B cell (primary cell): ENCODE measurements at regions of chr12 and their contacts with region 1.

Region 1: GRCh38 chr12:751192-751998 is 984 bp upstream of the WNK1 start:
- DNase-seq: peak; percentile 94
- ATAC-seq: peak; percentile 47
- H3K4me3 ChIP-seq: peak overlapping the region; percentile 54 to 92 (median 87)
- H3K4me3 Mint-ChIP-seq: no peak overlapping the region
- H3K27ac ChIP-seq: peak overlapping the region; percentile 86 to 90
- H3K27ac Mint-ChIP-seq: no peak overlapping the region
- H3K4me1 ChIP-seq: peaks cover 23 to 25% of the 10 kb centered on the region in 2 donors
- H3K4me1 Mint-ChIP-seq: peaks cover 27% of the 10 kb centered on the region
- H3K27me3 ChIP-seq: no peaks in the 10 kb centered on the region
- H3K27me3 Mint-ChIP-seq: no peaks in the 10 kb centered on the region
- CTCF ChIP-seq: peak; percentile 60

Region 2: GRCh38 chr12:401235-402028 is 350.0 kb before region 1 on chr12 and contains the start of gene CCDC77:
- CTCF ChIA-PET with region 1: no interaction called
- POLR2A ChIA-PET with region 1: no interaction called
- intact Hi-C with region 1: loop called (anchors 5 kb)
- DNase-seq: peak; percentile 97
- ATAC-seq: peak; percentile 100
- H3K4me3 ChIP-seq: peak within 1 kb of the TSS; percentile 76 to 89 (median 82)
- H3K4me3 Mint-ChIP-seq: no peak within 1 kb of the TSS
- H3K27ac ChIP-seq: peak within 1 kb of the TSS; percentile 53 to 76
- H3K27ac Mint-ChIP-seq: no peak within 1 kb of the TSS
- H3K4me1 ChIP-seq: peaks cover 11 to 14% of the 10 kb centered on the region in 2 donors
- H3K4me1 Mint-ChIP-seq: no peaks in the 10 kb centered on the region
- H3K27me3 ChIP-seq: no peaks in the 10 kb centered on the region
- H3K27me3 Mint-ChIP-seq: no peaks in the 10 kb centered on the region
- CTCF ChIP-seq: peak; percentile 21
- total RNA-seq, gene CCDC77: 12.9 and 18.5 TPM in 2 replicates

Region 3: GRCh38 chr12:630656-631632 is 120.5 kb before region 1 on chr12:
- CTCF ChIA-PET with region 1: interaction called, 13 read pairs
- POLR2A ChIA-PET with region 1: interaction called, 4 read pairs
- intact Hi-C with region 1: no loop called
- DNase-seq: peak; percentile 51
- ATAC-seq: peak; percentile 82
- H3K4me3 ChIP-seq: peak overlapping the region; percentile 51 to 79 (median 66)
- H3K4me3 Mint-ChIP-seq: peak overlapping the region; percentile 80
- H3K27ac ChIP-seq: peak overlapping the region; percentile 83 to 93
- H3K27ac Mint-ChIP-seq: peak overlapping the region; percentile 91
- H3K4me1 ChIP-seq: peaks cover 4 to 32% of the 10 kb centered on the region in 2 donors
- H3K4me1 Mint-ChIP-seq: peaks cover 38% of the 10 kb centered on the region
- H3K27me3 ChIP-seq: no peaks in the 10 kb centered on the region
- H3K27me3 Mint-ChIP-seq: no peaks in the 10 kb centered on the region
- CTCF ChIP-seq: no peak

Region 4: DNA sequence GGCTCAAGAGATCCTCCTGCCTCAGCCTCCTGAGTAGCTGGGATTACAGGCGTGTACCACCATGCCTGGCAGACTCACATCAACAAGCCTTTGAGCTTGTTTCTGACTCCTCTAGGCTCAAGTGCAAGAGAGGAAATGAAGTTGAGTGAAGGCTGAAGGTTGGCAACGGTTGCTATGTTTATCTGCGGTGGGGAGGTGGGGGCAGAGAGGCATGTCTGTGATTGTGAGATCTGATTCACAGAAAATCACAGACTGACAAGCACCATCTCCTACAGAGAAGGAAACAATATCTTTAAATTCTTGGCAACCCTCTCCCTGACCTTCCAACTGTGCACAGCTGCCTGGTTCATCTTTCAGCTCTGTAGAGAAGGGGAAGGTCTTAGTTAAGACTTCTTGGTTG is 66.0 kb before region 1 on chr12:
- CTCF ChIA-PET with region 1: interaction called, 44 read pairs
- POLR2A ChIA-PET with region 1: interaction called, 14 read pairs
- intact Hi-C with region 1: loop called (anchors 1 kb)
- DNase-seq: peak; percentile 93
- ATAC-seq: peak; percentile 78
- H3K4me3 ChIP-seq: peak overlapping the region in 4 of 5 experiments; percentile 5 to 31 (median 21)
- H3K4me3 Mint-ChIP-seq: peak overlapping the region; percentile 75
- H3K27ac ChIP-seq: peak overlapping the region; percentile 93 to 98
- H3K27ac Mint-ChIP-seq: peak overlapping the region; percentile 100
- H3K4me1 ChIP-seq: peaks cover 45 to 53% of the 10 kb centered on the region in 2 donors
- H3K4me1 Mint-ChIP-seq: peaks cover 49% of the 10 kb centered on the region
- H3K27me3 ChIP-seq: no peaks in the 10 kb centered on the region
- H3K27me3 Mint-ChIP-seq: no peaks in the 10 kb centered on the region
- CTCF ChIP-seq: no peak

Region 5: DNA sequence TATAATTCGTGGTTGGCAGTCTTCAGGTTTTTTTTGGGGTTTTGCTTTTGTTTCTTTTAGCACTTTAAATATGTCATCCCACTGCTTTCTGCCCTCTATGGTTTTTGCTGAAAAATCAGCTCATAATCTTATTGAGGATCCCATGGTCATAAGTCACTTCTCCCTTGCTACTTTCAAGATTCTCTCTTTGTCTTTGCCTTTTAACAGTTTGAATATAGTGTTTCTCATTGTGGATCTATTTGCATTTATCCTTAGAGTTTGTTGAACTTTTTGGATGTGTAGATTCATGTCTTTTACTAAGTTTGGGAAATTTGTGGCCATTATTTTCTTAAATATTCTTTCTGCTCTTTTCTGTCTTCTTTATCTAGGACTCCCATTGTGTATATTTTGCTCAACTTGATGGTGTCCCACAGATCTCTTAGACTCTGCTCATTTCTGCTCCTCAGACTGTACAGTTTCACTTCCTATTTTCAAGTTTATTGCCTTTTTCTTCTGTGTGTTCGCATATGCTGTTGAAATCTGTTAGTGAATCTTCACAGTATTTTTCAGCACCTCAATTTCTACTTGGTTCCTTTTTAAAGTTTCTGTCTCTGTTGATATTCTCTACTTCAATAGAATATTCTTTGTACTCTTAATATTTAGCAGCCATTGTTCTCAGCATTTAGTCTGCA is 71.8 kb after region 1 on chr12:
- CTCF ChIA-PET with region 1: interaction called, 40 read pairs
- POLR2A ChIA-PET with region 1: no interaction called
- intact Hi-C with region 1: loop called (anchors 2 kb)
- DNase-seq: peak; percentile 78
- ATAC-seq: peak; percentile 94
- H3K4me3 ChIP-seq: no peak overlapping the region
- H3K4me3 Mint-ChIP-seq: peak overlapping the region; percentile 1
- H3K27ac ChIP-seq: peak overlapping the region; percentile 40 to 57
- H3K27ac Mint-ChIP-seq: peak overlapping the region; percentile 32
- H3K4me1 ChIP-seq: peaks cover 16 to 23% of the 10 kb centered on the region in 2 donors
- H3K4me1 Mint-ChIP-seq: peaks cover 35% of the 10 kb centered on the region
- H3K27me3 ChIP-seq: no peaks in the 10 kb centered on the region
- H3K27me3 Mint-ChIP-seq: no peaks in the 10 kb centered on the region
- CTCF ChIP-seq: no peak

Region 6: DNA sequence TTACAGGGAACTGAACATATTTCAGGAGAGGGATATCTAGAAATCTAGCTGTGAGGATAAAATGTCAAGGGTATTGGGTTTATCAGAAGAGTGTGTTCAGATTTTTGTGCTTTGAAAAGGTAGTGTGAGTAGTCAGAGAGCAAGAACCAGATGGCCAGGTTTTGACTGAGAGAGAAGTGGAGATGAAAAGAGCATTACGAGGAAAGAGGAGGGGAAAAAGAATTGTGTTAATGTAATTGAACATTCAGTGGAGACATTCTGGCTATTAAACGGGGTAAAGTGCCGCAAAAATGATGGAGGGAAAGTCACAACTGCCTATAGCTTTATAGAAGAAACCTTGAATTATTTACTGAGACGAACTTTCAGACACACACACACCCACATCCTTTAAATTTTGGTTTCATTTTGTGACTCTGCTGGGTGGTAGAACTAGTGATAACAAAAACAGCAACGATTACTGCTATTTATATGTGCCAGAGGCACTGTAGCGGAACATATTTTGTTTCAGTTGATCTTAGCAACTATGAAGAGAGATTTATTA is 453.3 kb after region 1 on chr12:
- CTCF ChIA-PET with region 1: no interaction called
- POLR2A ChIA-PET with region 1: no interaction called
- intact Hi-C with region 1: loop called (anchors 5 kb)
- DNase-seq: peak; percentile 74
- ATAC-seq: peak; percentile 87
- H3K4me3 ChIP-seq: peak overlapping the region; percentile 42 to 85 (median 63)
- H3K4me3 Mint-ChIP-seq: no peak overlapping the region
- H3K27ac ChIP-seq: peak overlapping the region; percentile 86 to 94
- H3K27ac Mint-ChIP-seq: no peak overlapping the region
- H3K4me1 ChIP-seq: peaks cover 23 to 48% of the 10 kb centered on the region in 2 donors
- H3K4me1 Mint-ChIP-seq: peaks cover 28% of the 10 kb centered on the region
- H3K27me3 ChIP-seq: no peaks in the 10 kb centered on the region
- H3K27me3 Mint-ChIP-seq: no peaks in the 10 kb centered on the region
- CTCF ChIP-seq: no peak